ENCODE measurements at regions of chr6 and their contacts with region 1.

Region 1: GRCh38 chr6:138773177-138774091 is at the start of gene CCDC28A:
- DNase-seq: peak; percentile 97

Region 2: DNA sequence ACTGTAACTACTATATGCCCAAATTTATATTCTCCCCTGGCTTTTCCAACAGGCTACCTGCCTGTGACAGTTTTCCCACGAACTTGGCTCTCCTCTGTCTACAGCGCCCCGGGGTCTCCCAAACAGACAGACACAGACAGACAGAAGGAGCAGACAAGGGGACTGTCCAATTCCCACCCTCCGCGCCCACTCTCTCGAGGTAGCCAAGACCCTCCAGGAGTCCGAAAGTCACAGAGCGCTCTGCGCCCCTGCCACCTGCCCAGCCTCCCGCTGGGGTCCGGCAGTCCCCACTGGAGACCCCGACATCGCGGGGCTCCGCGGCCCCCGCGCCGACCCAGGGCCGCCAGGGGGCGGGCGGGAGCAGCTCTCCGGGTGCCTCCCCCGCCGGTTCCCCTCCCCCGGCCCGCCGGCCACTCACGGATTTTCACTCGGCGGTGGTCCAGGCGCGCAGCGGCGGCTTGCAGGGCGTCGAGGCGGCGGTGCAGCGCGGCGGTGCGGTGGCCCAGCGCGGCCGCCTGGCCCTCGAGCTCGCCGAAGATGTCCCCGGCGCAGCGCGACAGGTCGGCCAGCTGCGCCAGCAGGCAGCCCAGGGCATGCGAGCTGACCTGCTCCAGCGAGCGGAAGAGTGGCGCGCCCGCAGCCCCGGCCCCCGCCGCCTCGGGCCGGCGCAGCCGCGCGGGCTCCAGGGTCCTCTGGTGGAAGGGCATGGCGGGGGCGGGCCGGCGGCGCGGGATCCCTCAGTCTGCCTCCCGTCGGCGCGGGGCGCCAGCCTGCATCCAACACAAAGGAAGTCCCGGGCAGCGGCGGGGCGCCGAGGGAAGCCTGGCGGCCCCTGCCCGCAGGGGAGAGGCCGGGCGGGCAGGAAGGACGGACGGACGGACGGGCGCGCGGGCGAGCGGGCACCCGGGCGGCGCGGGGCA is 81.1 kb before region 1 on chr6:
- CTCF ChIA-PET with region 1: no interaction called
- POLR2A ChIA-PET with region 1: interaction called, 14 read pairs
- DNase-seq: peak; percentile 91